ENCODE measurements at regions of chr14 and their contacts with region 1.

Region 1: DNA sequence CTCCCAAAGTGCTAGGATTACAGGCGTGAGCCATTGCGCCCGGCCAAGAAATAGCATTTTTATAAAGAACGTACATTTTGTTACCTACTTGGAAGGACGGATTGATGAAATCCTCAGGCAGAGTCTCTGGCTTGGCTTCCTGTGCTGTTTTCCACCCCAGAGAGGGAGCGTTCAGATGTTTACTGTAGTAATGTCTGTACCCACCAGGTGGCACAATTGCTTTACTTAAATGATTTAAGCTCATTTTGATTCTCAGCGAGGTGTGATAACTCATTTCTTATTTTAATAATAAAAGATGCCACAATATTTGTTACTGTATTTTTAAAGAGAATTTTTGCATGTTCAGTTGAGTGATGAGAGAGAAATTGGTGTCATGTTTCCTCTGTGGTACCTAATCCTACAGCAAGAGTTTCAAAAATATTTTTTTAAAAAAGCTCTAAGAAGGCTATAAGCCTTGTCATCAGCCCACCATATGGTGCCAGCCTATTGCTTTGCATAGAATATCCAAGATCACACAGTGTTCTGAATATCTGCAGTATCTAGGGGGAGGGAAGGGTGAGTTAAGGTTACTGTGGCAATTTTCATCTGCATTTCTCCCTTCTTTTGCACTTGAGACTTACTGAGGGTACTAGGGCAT is 82.6 kb upstream of the TRAF3 start:
- DNase-seq: peak; percentile 37 to 74 (median 44)
- H3K4me3 ChIP-seq: no peak overlapping the region
- H3K27ac ChIP-seq: no peak overlapping the region
- H3K4me1 ChIP-seq: peaks cover 1% of the 10 kb centered on the region
- H3K27me3 ChIP-seq: no peaks in the 10 kb centered on the region
- CTCF ChIP-seq: peak; percentile 53 to 71 (median 62)
- EP300 ChIP-seq: no peak
- POLR2A ChIP-seq: no peak

Region 2: GRCh38 chr14:102917469-102918211 is 223.0 kb after region 1 on chr14:
- intact Hi-C with region 1: loop called in 3 of 4 experiments (anchors 5 to 10 kb)
- DNase-seq: peak in 2 of 5 donors; percentile 52 to 73
- H3K4me3 ChIP-seq: no peak overlapping the region
- H3K27ac ChIP-seq: no peak overlapping the region
- H3K4me1 ChIP-seq: no peaks in the 10 kb centered on the region
- H3K27me3 ChIP-seq: no peaks in the 10 kb centered on the region
- CTCF ChIP-seq: peak in 1 of 3 donors; percentile 10
- EP300 ChIP-seq: no peak
- POLR2A ChIP-seq: no peak